Heart right ventricle (tissue), 16 donors: ENCODE measurements at regions of chr2 and their contacts with region 1.

Region 1: DNA sequence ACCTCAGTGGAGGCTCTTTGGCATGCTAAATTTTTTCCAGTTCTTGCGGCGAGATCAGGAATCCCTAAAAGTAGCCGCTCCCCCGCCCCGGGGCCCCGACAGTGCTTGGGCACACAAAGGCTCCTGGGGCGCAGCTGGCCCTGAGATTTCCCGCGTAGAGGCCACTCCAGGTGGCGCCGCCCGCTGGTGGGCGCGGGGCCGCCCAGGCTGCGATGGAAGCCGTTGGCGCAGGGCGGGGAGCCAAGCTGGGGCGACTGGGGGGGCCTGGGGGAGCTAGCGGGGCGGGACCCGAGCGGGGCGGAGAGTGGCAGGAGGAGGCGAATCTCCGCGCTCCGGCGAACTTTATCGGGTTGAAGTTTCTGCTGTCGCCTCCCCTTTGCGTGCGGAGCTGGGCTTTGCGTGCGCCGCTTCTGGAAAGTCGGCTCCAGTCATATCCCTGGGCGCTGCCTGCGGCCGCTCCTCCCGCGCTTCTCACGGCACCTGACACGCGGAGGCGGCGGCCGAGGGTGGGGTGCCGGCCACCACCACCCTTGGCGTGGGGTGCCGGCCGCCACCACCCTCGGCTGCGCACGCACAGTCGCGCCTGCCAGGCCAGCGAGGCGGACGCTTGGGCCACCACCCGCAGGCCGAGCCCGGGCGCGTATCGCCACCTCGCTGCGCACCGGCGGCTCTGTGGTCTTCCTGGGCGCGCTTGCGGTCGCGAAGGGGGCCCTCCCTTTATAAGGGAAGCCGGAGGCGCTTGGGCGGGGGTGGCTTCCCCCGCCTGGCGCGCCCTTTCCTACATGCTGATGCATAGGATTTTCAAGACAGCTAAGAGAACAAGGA is 867 bp upstream of the CYP1B1 start:
- DNase-seq: peak; percentile 79
- ATAC-seq: peak; percentile 63 to 87 (median 75)
- H3K4me3 ChIP-seq: peak overlapping the region; percentile 33 to 67 (median 62)
- H3K27ac ChIP-seq: peak overlapping the region; percentile 84 to 96 (median 92)
- H3K4me1 ChIP-seq: peaks cover 3 to 63% (median 39%) of the 10 kb centered on the region in 9 donors
- H3K27me3 ChIP-seq: peaks cover 0 to 69% (median 43%) of the 10 kb centered on the region in 7 donors
- CTCF ChIP-seq: peak in 8 of 9 donors; percentile 5 to 60 (median 38)

Region 2: GRCh38 chr2:37982147-37982582 is 94.7 kb before region 1 on chr2:
- intact Hi-C with region 1: loop called in 4 of 10 experiments (anchors 1 to 10 kb)
- DNase-seq: peak; percentile 51 to 80
- ATAC-seq: peak in 5 of 8 donors; percentile 23 to 62 (median 53)
- H3K4me3 ChIP-seq: peak overlapping the region in 8 of 10 donors; percentile 4 to 45 (median 34)
- H3K27ac ChIP-seq: no peak overlapping the region
- H3K4me1 ChIP-seq: peaks cover 0 to 14% (median 0%) of the 10 kb centered on the region in 9 donors
- H3K27me3 ChIP-seq: no peaks in the 10 kb centered on the region
- CTCF ChIP-seq: peak; percentile 82 to 94 (median 87)

Region 3: DNA sequence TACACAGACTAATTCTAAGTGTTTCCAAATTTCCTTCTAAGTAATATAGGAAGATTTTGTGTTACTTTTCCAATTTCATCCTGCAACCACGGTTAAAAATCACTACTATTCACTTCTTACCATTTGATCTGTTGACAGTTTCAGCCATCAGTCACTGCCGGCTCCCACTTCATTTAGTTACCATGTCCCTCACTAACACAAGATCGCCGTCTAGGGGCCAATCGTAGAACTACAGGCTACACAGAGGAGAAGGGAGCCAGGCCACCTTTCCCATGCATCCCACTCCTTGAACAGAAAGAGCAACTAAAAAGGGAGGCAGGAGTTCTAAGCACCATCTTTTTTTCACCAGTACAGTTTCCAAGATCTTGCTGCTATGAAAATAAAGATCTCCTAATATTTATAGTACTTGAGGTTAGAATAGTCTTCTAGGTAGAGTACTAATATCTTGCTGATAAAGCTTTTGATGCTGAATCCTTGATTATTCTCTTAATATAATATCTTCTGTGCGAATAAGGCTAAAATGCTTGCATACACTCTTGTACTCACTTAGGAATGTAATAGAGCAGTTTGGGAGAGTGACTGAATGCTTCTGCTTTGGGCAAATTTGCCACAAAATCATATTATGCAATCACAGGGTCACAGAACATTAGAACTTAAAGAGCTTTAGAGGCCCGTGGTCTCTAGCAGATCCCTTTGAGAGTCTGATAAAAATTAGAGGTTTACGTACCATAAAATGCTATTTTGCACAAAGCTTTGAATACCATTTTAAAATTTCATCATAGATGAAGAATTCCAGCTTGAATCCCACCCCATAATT is 38.6 kb after region 1 on chr2:
- intact Hi-C with region 1: loop called in 4 of 10 experiments (anchors 2 to 5 kb)
- DNase-seq: peak; percentile 73 to 89
- ATAC-seq: peak in 7 of 8 donors; percentile 57 to 85 (median 76)
- H3K4me3 ChIP-seq: no peak overlapping the region
- H3K27ac ChIP-seq: peak overlapping the region in 8 of 10 donors; percentile 15 to 73 (median 63)
- H3K4me1 ChIP-seq: peaks cover 2 to 64% (median 37%) of the 10 kb centered on the region in 9 donors
- H3K27me3 ChIP-seq: no peaks in the 10 kb centered on the region
- CTCF ChIP-seq: peak; percentile 87 to 98 (median 94)